IMR-90 (cell line): ENCODE measurements at regions of chr10 and their contacts with region 1.

Region 1: DNA sequence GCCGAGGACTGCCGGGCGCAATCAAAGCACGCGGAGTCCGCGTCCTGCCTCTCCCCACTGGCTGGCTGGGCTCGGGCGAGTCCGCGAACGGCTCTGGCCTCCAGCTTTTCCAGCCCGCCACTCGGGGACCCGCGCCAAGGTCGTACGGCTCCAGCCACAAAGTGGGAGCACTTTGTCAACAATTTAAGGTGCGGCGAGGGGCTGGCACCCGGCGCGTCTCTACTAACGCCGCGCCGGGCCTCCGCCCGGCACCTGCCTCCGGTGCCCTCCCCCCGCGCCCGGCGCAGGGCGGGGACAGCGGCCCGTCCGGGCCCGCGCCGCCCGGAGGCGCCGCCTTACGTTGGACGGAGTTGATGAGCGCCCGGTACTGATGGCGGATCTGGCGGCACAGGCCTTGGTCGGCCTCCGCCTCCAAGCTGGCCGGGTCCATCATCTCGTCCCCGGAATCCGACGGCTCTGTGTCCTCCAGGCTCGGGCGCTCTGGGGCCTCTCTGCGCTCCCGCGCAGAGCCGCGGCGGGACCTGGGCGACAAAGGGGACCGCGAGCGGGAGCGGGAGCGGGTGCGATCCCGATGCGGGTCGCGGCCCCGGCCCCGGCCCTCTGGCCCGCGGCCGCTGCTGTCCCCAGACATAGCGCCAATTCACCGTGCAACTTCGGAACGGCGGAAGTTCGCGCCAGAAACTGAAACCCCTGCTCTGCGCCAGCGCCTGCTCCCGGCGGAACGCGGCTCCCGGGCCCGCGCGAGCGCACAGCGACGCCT is at the start of gene NSMCE4A:
- DNase-seq: peak; percentile 71
- ATAC-seq: peak; percentile 92
- H3K4me3 ChIP-seq: peak within 1 kb of the TSS; percentile 60
- H3K27ac ChIP-seq: peak within 1 kb of the TSS; percentile 57
- H3K4me1 ChIP-seq: peaks cover 2% of the 10 kb centered on the region; the same call in 1 of the 2 replicates
- H3K27me3 ChIP-seq: no peaks in the 10 kb centered on the region
- CTCF ChIP-seq: peak; percentile 71; the same call in 1 of the 2 replicates
- POLR2A ChIP-seq: peak; percentile 55; the same call in 1 of the 2 replicates
- RAD21 ChIP-seq: peak; percentile 49
- total RNA-seq, gene NSMCE4A: 13.4 and 20.8 TPM in 2 replicates

Region 2: GRCh38 chr10:121448766-121449421 is 525.8 kb before region 1 on chr10:
- CTCF ChIA-PET with region 1: no interaction called
- POLR2A ChIA-PET with region 1: no interaction called
- dilution Hi-C with region 1: no loop called
- in situ Hi-C with region 1: no loop called
- intact Hi-C with region 1: no loop called
- DNase-seq: no peak
- ATAC-seq: no peak
- H3K4me3 ChIP-seq: no peak overlapping the region
- H3K27ac ChIP-seq: no peak overlapping the region
- H3K4me1 ChIP-seq: no peaks in the 10 kb centered on the region
- H3K27me3 ChIP-seq: no peaks in the 10 kb centered on the region
- CTCF ChIP-seq: no peak
- POLR2A ChIP-seq: no peak
- RAD21 ChIP-seq: no peak

Region 3: DNA sequence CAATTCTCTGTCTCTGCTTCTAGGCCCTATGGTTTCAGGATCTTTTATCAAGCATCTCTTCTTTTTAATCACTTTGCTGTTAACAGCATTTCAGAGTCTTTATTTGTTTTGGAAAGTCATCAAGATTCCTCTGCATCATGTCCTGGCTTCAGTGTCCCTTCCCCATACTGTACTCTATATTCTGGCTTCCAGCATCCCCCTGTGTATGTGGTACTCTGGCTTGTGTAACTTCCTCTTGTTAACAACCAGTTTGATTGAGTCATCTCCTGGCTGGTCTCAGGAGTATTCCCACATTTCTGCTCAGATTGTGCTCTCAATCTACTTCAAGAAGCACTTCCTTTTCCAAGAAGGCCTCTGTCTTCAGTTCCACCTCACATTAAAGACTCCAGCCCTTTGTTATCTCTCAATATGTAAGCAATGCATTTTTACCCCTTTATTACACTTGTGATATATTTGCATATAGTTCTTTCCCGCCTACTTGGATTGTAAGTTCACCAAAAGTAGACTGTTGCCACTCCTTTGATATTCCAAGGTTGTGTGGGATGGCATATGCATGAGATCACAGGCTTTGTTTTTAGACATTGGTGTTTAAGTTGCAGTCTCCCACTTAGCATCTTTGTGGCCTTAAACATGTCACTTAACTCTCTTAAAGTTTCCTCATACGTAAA is 31.8 kb before region 1 on chr10:
- CTCF ChIA-PET with region 1: no interaction called
- POLR2A ChIA-PET with region 1: no interaction called
- dilution Hi-C with region 1: no loop called
- in situ Hi-C with region 1: no loop called
- intact Hi-C with region 1: loop called (anchors 1 kb)
- DNase-seq: peak; percentile 94
- ATAC-seq: peak; percentile 98
- H3K4me3 ChIP-seq: no peak overlapping the region
- H3K27ac ChIP-seq: peak overlapping the region; percentile 49; the same call in 1 of the 2 replicates
- H3K4me1 ChIP-seq: peaks cover 5% of the 10 kb centered on the region
- H3K27me3 ChIP-seq: no peaks in the 10 kb centered on the region
- CTCF ChIP-seq: no peak
- POLR2A ChIP-seq: no peak
- RAD21 ChIP-seq: no peak

Region 4: GRCh38 chr10:122112625-122113160 is 138.0 kb after region 1 on chr10:
- CTCF ChIA-PET with region 1: no interaction called
- POLR2A ChIA-PET with region 1: no interaction called
- dilution Hi-C with region 1: no loop called
- in situ Hi-C with region 1: no loop called
- intact Hi-C with region 1: loop called (anchors 1 kb)
- DNase-seq: peak; percentile 96
- ATAC-seq: peak; percentile 91
- H3K4me3 ChIP-seq: peak overlapping the region; percentile 70
- H3K27ac ChIP-seq: peak overlapping the region; percentile 65
- H3K4me1 ChIP-seq: peaks cover 10% of the 10 kb centered on the region
- H3K27me3 ChIP-seq: no peaks in the 10 kb centered on the region
- CTCF ChIP-seq: peak; percentile 76
- POLR2A ChIP-seq: peak; percentile 48; the same call in 1 of the 2 replicates
- RAD21 ChIP-seq: peak; percentile 71

Region 5: DNA sequence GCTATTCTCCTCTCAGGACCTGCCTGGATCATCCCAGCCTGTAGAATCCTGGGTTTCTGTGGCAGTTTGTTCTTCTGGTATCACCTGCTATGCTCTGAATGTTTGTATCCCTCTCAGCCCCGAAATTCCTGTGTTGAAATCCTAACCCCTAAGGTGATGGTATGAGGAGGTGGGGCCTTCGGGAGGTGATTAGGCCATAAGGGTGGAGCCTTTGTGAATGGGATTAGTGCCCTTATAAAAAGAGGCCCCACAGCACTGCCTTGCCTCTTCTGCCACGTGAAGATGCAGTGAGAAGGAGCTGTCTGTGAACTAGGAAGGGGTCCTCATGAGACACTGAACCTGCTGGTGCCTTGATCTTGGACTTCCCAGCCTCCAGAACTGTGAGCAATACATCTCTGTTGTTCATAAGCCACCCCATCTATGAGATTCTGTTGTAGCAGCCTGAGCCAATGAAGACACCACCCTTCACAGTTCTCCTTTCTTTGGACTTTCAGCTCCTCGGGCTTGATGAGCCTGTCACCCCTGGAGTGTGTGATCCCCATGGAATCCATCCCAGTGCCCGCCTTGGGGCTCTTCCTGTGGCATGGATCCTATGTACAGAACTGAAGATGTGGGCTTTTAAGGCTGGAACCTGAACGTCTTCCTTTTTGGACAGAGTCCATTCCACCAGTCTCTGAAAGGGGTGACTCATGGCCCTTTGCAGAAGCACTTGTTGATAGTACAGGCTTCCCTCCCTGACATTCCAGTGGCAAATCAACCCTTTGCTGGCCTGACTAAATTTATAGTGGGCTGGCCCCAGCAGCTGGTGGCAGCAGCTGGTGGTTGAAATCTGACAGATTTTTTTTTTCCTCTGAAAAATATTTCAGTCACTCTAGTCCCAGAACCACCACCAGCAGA is 152.3 kb after region 1 on chr10:
- CTCF ChIA-PET with region 1: no interaction called
- POLR2A ChIA-PET with region 1: no interaction called
- dilution Hi-C with region 1: no loop called
- in situ Hi-C with region 1: no loop called
- intact Hi-C with region 1: no loop called
- DNase-seq: peak; percentile 97
- ATAC-seq: peak; percentile 93
- H3K4me3 ChIP-seq: no peak overlapping the region
- H3K27ac ChIP-seq: peak overlapping the region; percentile 5
- H3K4me1 ChIP-seq: peaks cover 12% of the 10 kb centered on the region
- H3K27me3 ChIP-seq: no peaks in the 10 kb centered on the region
- CTCF ChIP-seq: no peak
- POLR2A ChIP-seq: no peak
- RAD21 ChIP-seq: no peak